MCF 10A (cell line): ENCODE measurements at regions of chr1 and their contacts with region 1.

Region 1: DNA sequence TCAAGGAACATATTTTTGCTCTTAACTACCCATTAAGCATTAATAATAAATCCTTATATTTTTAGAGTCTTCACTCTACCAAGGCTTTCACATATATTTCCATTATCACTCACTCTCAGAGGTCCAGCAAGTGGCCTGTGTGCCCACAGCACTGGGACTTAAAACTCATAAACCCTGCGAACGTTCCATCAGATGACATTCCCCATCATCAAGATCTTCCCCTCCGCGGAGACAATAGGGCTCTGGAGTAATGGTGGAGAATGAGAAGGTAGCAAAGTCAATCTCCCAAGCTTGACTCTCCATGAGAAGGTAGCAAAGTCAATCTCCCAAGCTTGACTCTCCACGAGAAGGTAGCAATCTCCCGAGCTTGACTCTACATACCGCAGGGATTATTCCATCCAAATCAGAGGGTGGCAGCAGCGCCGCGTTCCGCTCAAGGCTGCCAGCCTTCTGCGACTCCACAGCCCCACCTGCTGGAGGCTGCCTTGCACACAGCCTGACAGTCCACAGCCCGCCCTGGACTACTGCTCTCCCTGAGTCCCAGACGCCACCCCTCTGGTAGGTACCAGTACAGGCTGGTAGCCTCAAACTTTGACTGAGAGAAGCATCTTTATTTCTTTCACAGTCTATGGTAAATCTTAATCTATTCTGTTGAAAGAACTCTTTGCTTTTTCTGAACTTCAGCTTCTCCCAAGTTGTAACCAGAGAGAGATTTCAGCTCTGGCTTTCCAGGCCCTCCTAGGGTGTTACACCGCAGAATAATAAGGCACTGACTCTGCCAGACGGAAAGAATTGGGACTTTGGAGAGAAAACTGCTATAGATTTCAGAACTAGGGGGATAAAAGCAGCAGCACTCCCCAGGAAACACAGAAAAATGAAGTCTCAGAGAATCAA is 26.4 kb upstream of the CTTNBP2NL start:
- DNase-seq: peak; percentile 86
- H3K4me3 Mint-ChIP-seq: no peak overlapping the region
- H3K27ac Mint-ChIP-seq: no peak overlapping the region
- H3K4me1 Mint-ChIP-seq: peaks cover 6% of the 10 kb centered on the region
- H3K27me3 Mint-ChIP-seq: peaks cover 19% of the 10 kb centered on the region
- CTCF ChIP-seq: peak; percentile 98

Region 2: GRCh38 chr1:111290630-111291029 is 1079.0 kb before region 1 on chr1 and contains the start of gene CHIA:
- CTCF ChIA-PET with region 1: no interaction called
- POLR2A ChIA-PET with region 1: no interaction called
- intact Hi-C with region 1: no loop called
- DNase-seq: peak; percentile 76
- H3K4me3 Mint-ChIP-seq: no peak within 1 kb of the TSS
- H3K27ac Mint-ChIP-seq: no peak within 1 kb of the TSS
- H3K4me1 Mint-ChIP-seq: peaks cover 13% of the 10 kb centered on the region
- H3K27me3 Mint-ChIP-seq: no peaks in the 10 kb centered on the region
- CTCF ChIP-seq: no peak
- total RNA-seq, gene CHIA: not detected in 2 replicates

Region 3: DNA sequence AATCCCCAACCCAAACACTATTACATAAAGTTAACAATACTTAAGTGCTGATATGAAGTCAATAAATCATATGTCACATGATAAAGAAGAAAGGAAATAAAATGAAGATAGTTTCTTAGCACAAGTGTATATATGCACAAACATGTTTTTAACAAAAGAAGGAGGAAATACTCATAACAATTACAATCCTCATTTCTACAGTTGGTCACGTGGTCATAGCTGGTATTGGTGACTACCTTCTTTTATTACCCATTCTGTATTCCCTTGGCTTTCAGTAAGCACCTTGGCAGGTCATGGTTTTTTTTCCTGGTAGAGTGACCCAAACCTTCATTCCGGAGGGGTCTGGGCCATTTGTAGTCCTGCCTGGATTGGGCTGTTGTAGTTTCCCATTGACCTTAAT is 243.0 kb before region 1 on chr1:
- CTCF ChIA-PET with region 1: no interaction called
- POLR2A ChIA-PET with region 1: no interaction called
- intact Hi-C with region 1: no loop called
- DNase-seq: no peak
- H3K4me3 Mint-ChIP-seq: no peak overlapping the region
- H3K27ac Mint-ChIP-seq: no peak overlapping the region
- H3K4me1 Mint-ChIP-seq: no peaks in the 10 kb centered on the region
- H3K27me3 Mint-ChIP-seq: peaks cover 8% of the 10 kb centered on the region
- CTCF ChIP-seq: no peak

Region 4: GRCh38 chr1:112234710-112235109 is 134.9 kb before region 1 on chr1:
- CTCF ChIA-PET with region 1: no interaction called
- POLR2A ChIA-PET with region 1: no interaction called
- intact Hi-C with region 1: no loop called
- DNase-seq: no peak
- H3K4me3 Mint-ChIP-seq: no peak overlapping the region
- H3K27ac Mint-ChIP-seq: no peak overlapping the region
- H3K4me1 Mint-ChIP-seq: peaks cover 7% of the 10 kb centered on the region
- H3K27me3 Mint-ChIP-seq: peaks cover 66% of the 10 kb centered on the region
- CTCF ChIP-seq: no peak

Region 5: DNA sequence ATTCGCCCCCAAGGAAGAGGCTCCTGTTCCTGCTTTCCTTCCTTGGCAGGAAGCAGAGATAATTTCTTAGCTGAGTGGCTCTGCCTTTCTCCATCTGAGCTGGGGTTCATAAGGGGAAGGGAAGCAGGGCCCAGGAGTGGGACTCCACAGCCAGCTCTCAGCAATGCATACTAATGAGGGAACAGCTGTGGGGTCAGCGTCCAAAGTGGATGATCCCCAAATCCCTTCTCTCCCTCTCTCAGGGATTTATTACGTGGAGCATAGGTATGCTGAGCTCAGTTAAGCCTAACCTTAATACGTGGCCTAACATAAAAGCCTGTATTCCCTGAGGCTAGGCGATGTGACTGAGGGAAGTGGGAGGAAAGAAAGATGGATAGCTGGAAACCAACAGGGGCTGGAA is 60.9 kb before region 1 on chr1:
- CTCF ChIA-PET with region 1: interaction called, 21 read pairs
- POLR2A ChIA-PET with region 1: no interaction called
- intact Hi-C with region 1: no loop called
- DNase-seq: no peak
- H3K4me3 Mint-ChIP-seq: no peak overlapping the region
- H3K27ac Mint-ChIP-seq: no peak overlapping the region
- H3K4me1 Mint-ChIP-seq: no peaks in the 10 kb centered on the region
- H3K27me3 Mint-ChIP-seq: peaks cover 46% of the 10 kb centered on the region
- CTCF ChIP-seq: no peak

Region 6: GRCh38 chr1:112317140-112317539 is 52.5 kb before region 1 on chr1:
- CTCF ChIA-PET with region 1: interaction called, 21 read pairs
- POLR2A ChIA-PET with region 1: interaction called, 3 read pairs
- intact Hi-C with region 1: no loop called
- DNase-seq: no peak
- H3K4me3 Mint-ChIP-seq: no peak overlapping the region
- H3K27ac Mint-ChIP-seq: no peak overlapping the region
- H3K4me1 Mint-ChIP-seq: peaks cover 23% of the 10 kb centered on the region
- H3K27me3 Mint-ChIP-seq: no peaks in the 10 kb centered on the region
- CTCF ChIP-seq: no peak

Region 7: GRCh38 chr1:112383759-112384356 is 14.2 kb after region 1 on chr1:
- CTCF ChIA-PET with region 1: interaction called, 35 read pairs
- POLR2A ChIA-PET with region 1: interaction called, 4 read pairs
- intact Hi-C with region 1: no loop called
- DNase-seq: no peak
- H3K4me3 Mint-ChIP-seq: no peak overlapping the region
- H3K27ac Mint-ChIP-seq: no peak overlapping the region
- H3K4me1 Mint-ChIP-seq: no peaks in the 10 kb centered on the region
- H3K27me3 Mint-ChIP-seq: peaks cover 51% of the 10 kb centered on the region
- CTCF ChIP-seq: no peak